ENCODE measurements at regions of chr10 and their contacts with region 1.

Region 1: DNA sequence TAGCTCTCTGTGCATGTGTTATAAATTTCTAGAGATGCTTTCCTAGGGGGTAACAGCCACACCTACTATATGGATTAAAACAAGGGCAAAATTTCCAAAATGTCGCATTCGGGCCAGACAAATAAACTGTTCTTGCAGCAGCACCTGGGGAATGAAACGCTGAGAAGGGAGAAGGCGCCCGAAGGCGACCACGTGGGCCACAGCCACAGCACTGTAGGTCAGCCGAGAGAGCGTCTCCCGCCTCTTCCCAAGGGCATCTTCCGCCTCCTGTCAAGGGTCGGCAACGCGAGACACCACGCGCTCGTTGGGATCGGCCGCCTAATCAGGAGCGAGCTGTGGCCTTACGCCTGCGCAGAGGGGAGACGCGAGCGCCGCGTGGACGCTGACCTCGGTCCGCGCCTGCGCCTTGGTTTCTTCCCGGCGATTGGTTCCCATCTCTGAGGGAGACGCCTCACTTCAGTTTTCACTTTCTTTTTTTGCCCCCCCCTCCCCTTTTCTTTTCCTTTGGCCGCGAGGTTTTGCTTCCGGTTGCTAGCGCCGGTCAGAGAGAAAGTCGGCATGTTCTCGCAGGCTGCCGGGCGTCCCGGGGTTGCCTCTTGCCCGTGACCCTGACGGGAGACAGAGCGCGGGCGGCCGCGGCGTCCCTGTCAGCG is at the start of gene TASOR2:
- DNase-seq: peak; percentile 91 to 96 (median 93)
- ATAC-seq: peak; percentile 92
- H3K4me3 ChIP-seq: peak within 1 kb of the TSS; percentile 76
- H3K4me3 Mint-ChIP-seq: peak within 1 kb of the TSS; percentile 93 to 100 (median 98)
- H3K27ac ChIP-seq: peak within 1 kb of the TSS; percentile 96
- H3K27ac Mint-ChIP-seq: peak within 1 kb of the TSS; percentile 90 to 99 (median 98)
- H3K4me1 ChIP-seq: peaks cover 15 to 24% of the 10 kb centered on the region in 2 donors
- H3K4me1 Mint-ChIP-seq: peaks cover 31 to 55% (median 44%) of the 10 kb centered on the region in 7 donors
- H3K27me3 ChIP-seq: no peaks in the 10 kb centered on the region
- H3K27me3 Mint-ChIP-seq: peaks cover 0 to 12% (median under 1%) of the 10 kb centered on the region in 5 donors
- total RNA-seq, gene TASOR2: 55.0 to 86.5 (median 62.1) TPM

Region 2: DNA sequence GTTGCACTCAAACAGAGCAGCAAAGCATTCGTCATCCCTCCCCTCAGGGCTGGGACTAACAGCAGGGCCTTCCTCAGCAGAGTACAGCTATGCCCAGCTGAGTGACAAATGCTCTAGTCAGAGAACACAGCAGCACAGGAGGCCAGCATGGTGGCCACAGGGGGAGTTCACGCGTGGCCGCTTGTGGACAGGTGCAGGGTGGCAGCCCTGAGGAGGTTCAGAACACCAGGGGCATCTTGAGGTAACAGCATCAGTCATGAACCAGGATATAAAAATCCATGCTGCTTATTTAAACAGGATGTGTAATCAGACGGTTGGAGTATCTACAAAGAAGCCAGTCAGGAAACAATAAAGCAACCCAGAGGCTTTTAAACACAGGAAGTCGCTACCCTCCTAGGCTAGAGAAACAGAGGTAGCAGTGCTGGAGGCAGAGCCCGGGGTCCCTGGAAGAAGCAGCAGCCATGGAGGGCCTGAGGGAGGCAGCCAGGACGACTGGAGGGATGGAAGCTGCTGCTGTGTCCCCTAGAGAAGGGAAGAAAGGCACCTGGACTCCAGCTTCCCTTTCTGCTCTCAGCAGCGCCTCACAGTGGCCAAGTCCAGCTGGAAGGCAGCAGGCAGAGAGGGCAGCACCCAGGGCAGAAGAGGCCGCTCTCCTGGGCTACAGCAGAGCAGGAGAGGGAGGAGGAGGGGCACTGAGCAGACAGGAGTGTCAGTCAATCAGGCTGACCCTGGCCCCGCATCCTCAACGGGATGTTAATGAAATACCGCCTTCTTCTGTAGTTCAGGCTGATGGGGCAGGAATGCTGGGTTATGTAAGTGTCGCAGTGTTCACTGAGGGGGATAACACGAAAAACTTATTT is 390.5 kb before region 1 on chr10:
- CTCF ChIA-PET with region 1: no interaction called
- POLR2A ChIA-PET with region 1: no interaction called
- intact Hi-C with region 1: loop called (anchors 10 kb)
- DNase-seq: peak; percentile 52 to 78 (median 67)
- ATAC-seq: peak; percentile 60
- H3K4me3 ChIP-seq: peak overlapping the region; percentile 58
- H3K4me3 Mint-ChIP-seq: peak overlapping the region; percentile 82 to 100 (median 94)
- H3K27ac ChIP-seq: peak overlapping the region; percentile 71
- H3K27ac Mint-ChIP-seq: peak overlapping the region in 8 of 9 donors; percentile 88 to 100 (median 98)
- H3K4me1 ChIP-seq: peaks cover 47 to 49% of the 10 kb centered on the region in 2 donors
- H3K4me1 Mint-ChIP-seq: peaks cover 61 to 96% (median 80%) of the 10 kb centered on the region in 7 donors
- H3K27me3 ChIP-seq: no peaks in the 10 kb centered on the region
- H3K27me3 Mint-ChIP-seq: no peaks in the 10 kb centered on the region

Region 3: DNA sequence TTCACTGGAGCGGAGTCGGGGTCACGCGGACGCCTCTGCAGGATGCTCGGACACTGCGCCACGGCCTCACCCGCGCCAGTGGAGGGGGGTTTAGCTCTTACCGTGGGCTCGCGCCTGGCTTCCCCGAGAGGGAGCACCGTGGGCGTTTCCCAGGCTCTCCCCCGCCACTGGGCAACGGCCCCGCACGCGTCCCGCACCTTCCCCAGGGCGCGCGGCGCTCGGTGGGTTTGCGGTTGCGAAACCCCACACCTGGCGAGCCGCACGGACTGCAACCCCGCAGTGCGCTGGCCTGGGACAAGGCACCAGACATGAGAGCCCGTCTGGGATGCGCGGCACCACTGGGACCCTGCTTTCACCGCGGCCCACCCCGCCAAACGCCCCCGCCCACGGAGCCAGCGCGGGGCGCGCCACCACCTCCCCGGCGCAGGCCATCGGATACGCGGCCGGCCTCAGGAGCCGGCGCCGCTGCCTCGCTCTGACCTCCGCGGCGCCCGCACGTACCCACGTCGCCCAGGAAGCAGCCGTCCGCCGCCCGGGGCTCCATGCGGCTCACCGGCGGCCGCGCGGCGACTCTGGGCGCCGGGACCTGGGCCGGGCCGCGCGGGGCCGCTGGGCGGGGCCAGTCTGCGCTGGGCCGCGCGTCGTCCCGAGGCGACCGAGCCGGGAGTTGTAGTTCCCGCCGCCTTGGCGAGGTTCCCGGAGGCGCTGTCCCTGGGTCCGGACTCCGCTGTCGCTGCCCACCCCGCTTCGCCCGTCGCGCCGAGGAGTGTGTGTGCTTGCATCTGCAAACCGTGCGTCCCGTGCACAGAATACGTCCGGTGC is 18.2 kb before region 1 on chr10 and contains the start of gene ASB13:
- CTCF ChIA-PET with region 1: no interaction called
- POLR2A ChIA-PET with region 1: interaction called, 8 read pairs
- intact Hi-C with region 1: loop called (anchors 1 kb)
- DNase-seq: peak in 8 of 9 donors; percentile 12 to 62 (median 24)
- ATAC-seq: peak; percentile 87
- H3K4me3 ChIP-seq: peak within 1 kb of the TSS; percentile 71
- H3K4me3 Mint-ChIP-seq: peak within 1 kb of the TSS; percentile 91 to 98 (median 95)
- H3K27ac ChIP-seq: peak within 1 kb of the TSS; percentile 62
- H3K27ac Mint-ChIP-seq: peak within 1 kb of the TSS; percentile 35 to 92 (median 84)
- H3K4me1 ChIP-seq: peaks cover 6 to 9% of the 10 kb centered on the region in 2 donors
- H3K4me1 Mint-ChIP-seq: peaks cover 13 to 36% (median 30%) of the 10 kb centered on the region in 7 donors
- H3K27me3 ChIP-seq: no peaks in the 10 kb centered on the region
- H3K27me3 Mint-ChIP-seq: peaks cover 0 to 18% (median 0%) of the 10 kb centered on the region in 5 donors
- total RNA-seq, gene ASB13: 8.0 to 18.3 (median 10.2) TPM

Region 4: DNA sequence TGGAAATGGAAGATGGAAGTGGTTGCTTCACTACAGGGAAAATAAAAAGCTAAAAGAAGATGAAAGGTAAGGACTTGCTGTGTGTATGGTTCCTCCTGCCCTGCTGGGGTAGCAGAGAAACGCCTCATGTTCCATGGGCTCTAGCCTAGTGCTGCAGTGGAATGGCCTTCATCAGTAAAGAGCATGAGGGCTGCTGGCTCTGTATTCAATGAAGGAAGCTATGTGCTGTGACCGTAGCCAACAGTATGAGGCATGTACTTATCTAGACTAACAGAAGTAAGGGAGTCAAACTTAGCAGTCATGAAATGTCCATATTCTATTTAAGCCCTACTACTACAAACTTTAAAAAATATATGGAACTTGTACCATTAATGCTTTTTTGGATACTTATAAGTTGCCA is 74.5 kb after region 1 on chr10:
- CTCF ChIA-PET with region 1: no interaction called
- POLR2A ChIA-PET with region 1: no interaction called
- intact Hi-C with region 1: loop called in 1 of 2 experiments (anchors 2 kb)
- DNase-seq: no peak
- ATAC-seq: no peak
- H3K4me3 ChIP-seq: no peak overlapping the region
- H3K4me3 Mint-ChIP-seq: no peak overlapping the region
- H3K27ac ChIP-seq: no peak overlapping the region
- H3K27ac Mint-ChIP-seq: peak overlapping the region in 6 of 9 donors; percentile 8 to 80 (median 70)
- H3K4me1 ChIP-seq: peaks cover 0 to 4% of the 10 kb centered on the region in 2 donors
- H3K4me1 Mint-ChIP-seq: peaks cover 4 to 22% (median 12%) of the 10 kb centered on the region in 7 donors
- H3K27me3 ChIP-seq: no peaks in the 10 kb centered on the region
- H3K27me3 Mint-ChIP-seq: no peaks in the 10 kb centered on the region

Region 5: GRCh38 chr10:5873515-5873995 is 189.1 kb after region 1 on chr10:
- CTCF ChIA-PET with region 1: no interaction called
- POLR2A ChIA-PET with region 1: no interaction called
- intact Hi-C with region 1: loop called (anchors 1 kb)
- DNase-seq: peak; percentile 42 to 76 (median 67)
- ATAC-seq: peak; percentile 96
- H3K4me3 ChIP-seq: no peak overlapping the region
- H3K4me3 Mint-ChIP-seq: peak overlapping the region in 8 of 10 donors; percentile 46 to 76 (median 58)
- H3K27ac ChIP-seq: no peak overlapping the region
- H3K27ac Mint-ChIP-seq: peak overlapping the region in 2 of 9 donors; percentile 60 to 74
- H3K4me1 ChIP-seq: no peaks in the 10 kb centered on the region
- H3K4me1 Mint-ChIP-seq: peaks cover 2 to 10% (median 5%) of the 10 kb centered on the region in 7 donors
- H3K27me3 ChIP-seq: no peaks in the 10 kb centered on the region
- H3K27me3 Mint-ChIP-seq: peaks cover 0 to 4% (median 0%) of the 10 kb centered on the region in 5 donors

Region 6: DNA sequence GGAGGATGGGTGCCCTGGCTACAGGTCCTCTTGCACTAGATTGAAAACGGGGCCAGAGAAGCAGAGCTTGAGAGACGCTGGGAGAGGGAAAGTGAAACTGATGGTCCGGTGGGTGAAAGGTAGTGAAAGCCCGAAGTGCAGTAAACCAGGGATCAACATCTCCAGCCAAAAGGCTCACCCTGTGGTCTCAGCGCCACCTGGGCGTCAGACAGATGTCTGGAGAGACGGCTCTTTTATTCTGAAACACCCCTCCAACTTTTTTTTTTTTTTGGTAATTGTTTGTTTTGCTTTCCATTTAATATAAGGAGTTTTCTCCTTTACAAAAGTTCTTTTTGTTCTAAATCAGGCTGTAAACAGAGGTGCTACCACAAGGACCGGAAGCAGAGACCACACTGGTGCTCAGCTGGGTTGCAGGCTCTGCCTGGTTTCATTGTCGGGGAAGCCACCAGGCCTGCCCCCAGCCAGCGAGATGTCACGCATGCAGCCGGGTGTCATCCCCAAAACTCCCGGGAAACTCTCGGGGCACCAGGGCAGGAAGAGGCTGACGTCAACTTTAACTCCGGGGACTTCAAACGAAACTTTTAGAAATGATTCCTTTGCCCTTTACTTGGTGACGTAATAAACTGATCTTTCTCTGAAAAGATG is 366.5 kb after region 1 on chr10:
- CTCF ChIA-PET with region 1: no interaction called
- POLR2A ChIA-PET with region 1: no interaction called
- intact Hi-C with region 1: loop called in 1 of 2 experiments (anchors 10 kb)
- DNase-seq: peak; percentile 62 to 98 (median 90)
- ATAC-seq: peak; percentile 92
- H3K4me3 ChIP-seq: peak overlapping the region; percentile 49
- H3K4me3 Mint-ChIP-seq: peak overlapping the region; percentile 78 to 98 (median 92)
- H3K27ac ChIP-seq: peak overlapping the region; percentile 79
- H3K27ac Mint-ChIP-seq: peak overlapping the region; percentile 94 to 99 (median 97)
- H3K4me1 ChIP-seq: peaks cover 52 to 54% of the 10 kb centered on the region in 2 donors
- H3K4me1 Mint-ChIP-seq: peaks cover 54 to 90% (median 85%) of the 10 kb centered on the region in 7 donors
- H3K27me3 ChIP-seq: no peaks in the 10 kb centered on the region
- H3K27me3 Mint-ChIP-seq: no peaks in the 10 kb centered on the region